MCF 10A (cell line): ENCODE measurements at regions of chr6 and their contacts with region 1.

Region 1: DNA sequence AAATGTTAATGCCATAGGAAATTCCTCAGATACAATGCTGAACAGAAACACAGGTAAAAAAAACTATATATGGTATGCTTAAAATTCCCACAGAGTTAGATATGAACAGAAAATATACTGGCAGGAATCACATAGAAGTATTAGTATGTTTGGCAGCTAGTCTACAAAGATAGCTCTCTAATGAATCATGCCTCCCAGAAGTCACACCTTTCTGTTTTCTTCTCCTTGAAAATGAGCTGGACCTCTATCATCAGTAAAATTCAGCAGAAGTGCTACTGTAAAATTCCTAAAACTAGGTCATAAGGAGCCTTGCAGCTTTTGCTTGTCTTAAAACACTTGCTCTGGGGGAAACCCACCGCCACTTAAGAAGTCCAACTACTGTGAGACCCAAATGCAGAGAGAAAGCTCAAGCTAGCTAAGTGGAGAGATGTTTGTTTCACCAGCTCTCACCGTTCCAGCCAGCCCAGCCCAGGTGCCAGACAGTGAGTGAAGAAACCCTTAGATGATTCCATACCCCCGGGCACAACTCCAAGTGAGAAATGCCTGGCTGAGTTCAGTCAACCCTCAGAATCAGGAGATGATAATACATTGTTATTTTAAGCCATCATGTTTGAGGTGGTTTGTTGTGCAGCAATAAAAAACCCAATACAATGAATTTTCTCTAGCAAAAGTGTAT is 43.0 kb downstream of the TSPYL4 start:
- DNase-seq: peak; percentile 94
- H3K4me3 Mint-ChIP-seq: peak overlapping the region; percentile 58
- H3K27ac Mint-ChIP-seq: peak overlapping the region; percentile 83
- H3K4me1 Mint-ChIP-seq: peaks cover 22% of the 10 kb centered on the region
- H3K27me3 Mint-ChIP-seq: no peaks in the 10 kb centered on the region
- CTCF ChIP-seq: no peak

Region 2: DNA sequence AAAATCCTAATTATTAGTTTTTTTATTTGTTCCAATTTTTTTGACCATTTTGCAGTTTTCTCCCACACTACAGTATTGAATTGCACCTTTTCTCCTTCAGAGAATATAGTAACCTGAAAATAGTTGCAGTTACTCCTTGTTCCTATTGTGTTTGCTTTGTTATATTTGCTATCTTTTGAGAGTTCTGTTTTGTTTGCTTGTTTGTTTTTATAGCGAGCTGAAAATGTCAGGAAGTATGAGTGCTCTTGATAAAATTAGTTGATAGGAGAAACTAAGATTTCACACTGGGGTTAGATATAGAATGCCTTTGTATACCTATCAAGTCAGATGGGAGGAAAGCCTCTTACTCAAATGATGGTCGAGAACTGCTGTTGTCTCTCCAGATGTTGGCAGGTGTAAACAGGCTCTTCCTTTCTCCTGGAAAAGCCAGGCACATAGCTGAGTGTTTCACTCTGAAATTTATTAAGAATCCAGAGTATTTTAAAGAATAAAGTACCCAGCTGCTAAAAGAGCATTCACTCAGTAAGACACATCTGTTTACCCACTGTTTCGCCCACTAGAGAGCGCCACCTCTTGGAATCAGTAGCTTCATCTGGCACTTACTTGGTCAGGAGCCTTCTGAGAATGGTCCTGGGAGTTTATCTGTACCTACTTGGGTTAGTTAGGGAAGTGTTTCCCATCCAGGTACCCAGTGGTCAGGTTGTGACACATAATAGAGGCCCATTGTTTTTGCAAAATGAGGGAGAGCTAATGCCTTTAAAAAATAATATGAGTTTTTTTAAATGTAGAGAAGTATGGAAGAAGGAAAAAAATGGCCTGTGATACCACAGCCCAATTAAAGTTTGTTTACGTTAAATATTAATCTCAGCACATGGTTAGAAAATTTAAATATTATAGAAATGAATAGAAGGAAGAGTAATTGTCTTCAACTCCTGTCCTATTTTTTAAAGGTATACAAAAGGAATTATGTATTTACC is 99.0 kb before region 1 on chr6:
- CTCF ChIA-PET with region 1: interaction called, 10 read pairs
- POLR2A ChIA-PET with region 1: interaction called, 3 read pairs
- intact Hi-C with region 1: no loop called
- DNase-seq: peak; percentile 63
- H3K4me3 Mint-ChIP-seq: no peak overlapping the region
- H3K27ac Mint-ChIP-seq: no peak overlapping the region
- H3K4me1 Mint-ChIP-seq: no peaks in the 10 kb centered on the region
- H3K27me3 Mint-ChIP-seq: no peaks in the 10 kb centered on the region
- CTCF ChIP-seq: peak; percentile 48

Region 3: DNA sequence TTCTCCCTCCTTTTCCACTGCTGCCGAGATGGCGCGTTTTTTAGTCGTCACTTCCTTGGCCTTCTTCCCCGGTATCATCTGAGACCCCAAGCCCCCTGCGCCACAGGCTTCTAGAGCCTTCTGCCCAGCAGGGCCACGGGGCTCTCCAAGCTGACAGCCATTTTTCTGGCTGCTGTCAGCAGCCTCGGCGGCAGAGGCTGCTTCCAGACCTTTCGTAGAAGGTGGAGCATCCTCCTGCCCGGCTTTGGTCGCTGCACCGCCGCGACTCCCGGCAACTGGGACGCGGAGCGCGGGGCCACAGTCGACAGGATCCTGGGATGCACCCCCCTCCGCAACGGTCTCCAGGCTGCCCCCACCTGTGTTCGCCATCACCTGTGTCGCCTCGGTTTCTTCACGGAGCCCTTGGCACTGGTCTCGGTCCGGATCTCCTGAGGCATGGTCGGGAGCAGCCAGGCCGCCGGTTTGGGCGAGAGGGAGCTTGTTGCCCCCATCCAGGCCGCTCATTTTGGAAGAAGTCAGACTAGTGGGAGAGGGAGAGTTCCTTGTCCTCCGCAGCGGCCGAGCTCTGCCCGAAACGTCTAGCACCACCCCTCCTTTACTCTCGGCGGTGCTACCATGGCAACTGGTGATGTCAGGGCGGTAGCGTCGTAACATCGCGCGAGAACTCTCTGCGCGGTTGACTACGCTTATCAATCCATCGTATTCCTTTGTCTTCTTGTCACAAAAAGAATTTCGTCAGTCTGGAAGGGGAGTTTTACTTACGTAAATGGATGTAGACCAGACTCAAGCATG is 42.8 kb after region 1 on chr6 and contains the start of gene TSPYL4:
- CTCF ChIA-PET with region 1: interaction called, 3 read pairs
- POLR2A ChIA-PET with region 1: interaction called, 16 read pairs
- intact Hi-C with region 1: no loop called
- DNase-seq: peak; percentile 96
- H3K4me3 Mint-ChIP-seq: no peak within 1 kb of the TSS
- H3K27ac Mint-ChIP-seq: no peak within 1 kb of the TSS
- H3K4me1 Mint-ChIP-seq: peaks cover 22% of the 10 kb centered on the region
- H3K27me3 Mint-ChIP-seq: no peaks in the 10 kb centered on the region
- CTCF ChIP-seq: no peak
- total RNA-seq, gene TSPYL4: 9.1 and 9.8 TPM in 2 replicates